Panc1 (cell line): ENCODE measurements at regions of chr1 and their contacts with region 1.

Region 1: DNA sequence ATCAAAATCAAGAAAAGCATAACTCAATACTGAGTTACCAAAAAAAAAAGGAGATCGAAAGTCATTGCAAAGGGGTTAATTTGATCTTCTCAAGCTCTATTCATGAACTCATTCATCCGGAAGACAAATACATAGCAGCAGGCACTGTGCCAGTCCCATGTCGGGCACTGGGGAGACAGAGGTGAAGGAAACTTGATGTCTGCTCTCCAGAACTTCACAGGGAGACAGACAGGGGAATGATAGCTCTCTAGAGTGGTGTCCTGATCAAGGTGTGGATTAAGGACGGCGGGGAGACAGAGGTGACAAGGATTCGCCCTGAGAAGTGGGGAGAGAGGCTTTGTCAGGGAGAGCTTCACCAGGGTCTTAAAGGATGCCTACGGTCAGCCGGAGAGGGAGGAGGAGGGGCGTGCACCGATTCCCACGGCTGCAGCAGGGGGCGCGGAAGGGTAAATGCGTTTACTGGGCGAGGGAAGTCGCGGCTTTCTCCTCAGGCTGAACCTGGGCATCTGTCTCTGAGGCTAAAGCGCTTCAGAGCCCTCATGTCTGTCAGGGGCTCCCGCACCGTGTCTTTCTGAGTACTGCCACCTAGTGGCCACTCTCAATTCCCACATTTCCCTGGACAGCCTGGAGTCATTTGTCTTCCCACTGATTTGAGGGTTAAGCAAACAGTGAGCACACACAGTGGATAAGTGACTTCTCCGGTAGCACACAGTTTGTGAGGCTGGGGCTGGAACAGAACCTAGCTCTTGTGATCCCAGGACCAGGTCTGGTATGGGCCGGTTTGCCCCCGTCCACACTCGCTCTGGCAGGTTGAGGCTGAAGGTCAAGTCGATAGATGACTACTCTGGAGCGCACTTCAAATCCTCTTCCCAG is 152.8 kb downstream of the TENT5C start:
- DNase-seq: peak; percentile 59
- ATAC-seq: peak; percentile 98
- H3K4me3 ChIP-seq: peak overlapping the region; percentile 27 to 58
- H3K27ac ChIP-seq: no peak overlapping the region
- H3K4me1 ChIP-seq: no peaks in the 10 kb centered on the region
- H3K27me3 ChIP-seq: 0 out of 2 replicates have a peak, but pooled peaks cover 2% of the 10 kb centered on the region
- CTCF ChIP-seq: peak; percentile 81

Region 2: GRCh38 chr1:117512743-117513321 is 245.8 kb before region 1 on chr1:
- CTCF ChIA-PET with region 1: interaction called, 3 read pairs
- POLR2A ChIA-PET with region 1: no interaction called
- in situ Hi-C with region 1: no loop called
- intact Hi-C with region 1: loop called (anchors 5 kb)
- DNase-seq: no peak
- ATAC-seq: no peak
- H3K4me3 ChIP-seq: no peak overlapping the region
- H3K27ac ChIP-seq: no peak overlapping the region
- H3K4me1 ChIP-seq: no peaks in the 10 kb centered on the region
- H3K27me3 ChIP-seq: no peaks in the 10 kb centered on the region
- CTCF ChIP-seq: peak; percentile 51; the same call in 1 of the 2 replicates

Region 3: GRCh38 chr1:117534995-117535467 is 223.6 kb before region 1 on chr1:
- CTCF ChIA-PET with region 1: no interaction called
- POLR2A ChIA-PET with region 1: no interaction called
- in situ Hi-C with region 1: no loop called
- intact Hi-C with region 1: loop called (anchors 5 kb)
- DNase-seq: no peak
- ATAC-seq: peak; percentile 78; the same call in 1 of the 2 replicates
- H3K4me3 ChIP-seq: no peak overlapping the region
- H3K27ac ChIP-seq: no peak overlapping the region
- H3K4me1 ChIP-seq: no peaks in the 10 kb centered on the region
- H3K27me3 ChIP-seq: no peaks in the 10 kb centered on the region
- CTCF ChIP-seq: peak; percentile 74

Region 4: DNA sequence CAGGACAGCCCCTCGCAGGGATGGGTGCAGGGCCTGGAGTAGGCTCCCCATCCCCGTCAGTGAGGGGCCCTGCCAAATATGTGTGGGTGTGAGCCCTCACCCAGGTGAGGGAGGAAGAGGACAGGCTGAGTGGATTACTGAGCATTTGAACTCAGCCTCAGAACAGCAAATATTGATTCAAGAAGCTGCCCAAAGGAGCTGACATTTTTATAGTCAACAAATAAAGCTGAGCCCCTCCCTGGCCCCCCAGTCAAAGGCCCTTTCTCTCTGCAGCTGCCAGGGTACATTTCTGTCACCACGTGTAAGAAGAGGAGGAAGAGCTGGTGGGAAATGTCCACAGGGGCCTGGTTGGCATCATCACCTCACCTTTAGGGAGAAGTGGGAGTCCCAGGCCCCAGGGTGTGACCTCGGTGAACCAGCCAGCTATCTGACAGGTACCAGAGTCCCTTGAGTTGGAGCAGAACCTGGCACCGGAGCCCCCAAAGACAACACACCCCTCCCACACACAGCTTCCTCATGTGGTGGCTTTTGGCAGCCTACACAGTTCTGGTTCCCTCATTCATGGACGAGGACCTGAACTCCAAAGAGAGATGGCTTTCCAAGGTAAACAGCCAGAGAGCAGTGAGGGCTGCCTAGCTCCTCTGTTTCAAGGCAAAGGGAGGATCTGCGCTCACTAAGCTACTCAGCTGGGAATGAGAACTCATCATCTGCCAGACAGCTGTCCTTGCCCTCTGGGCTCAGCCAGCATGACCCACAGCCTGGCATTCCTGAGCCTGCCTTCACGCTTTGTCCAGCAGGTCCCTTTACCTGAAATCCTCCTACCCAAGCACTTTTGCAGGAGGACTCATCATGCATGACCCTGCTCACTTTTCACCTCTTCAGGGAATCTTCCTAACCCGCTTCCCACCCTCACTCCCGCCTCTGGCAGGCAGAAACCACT is 195.8 kb before region 1 on chr1:
- CTCF ChIA-PET with region 1: no interaction called
- POLR2A ChIA-PET with region 1: no interaction called
- in situ Hi-C with region 1: no loop called
- intact Hi-C with region 1: no loop called
- DNase-seq: no peak
- ATAC-seq: no peak
- H3K4me3 ChIP-seq: no peak overlapping the region
- H3K27ac ChIP-seq: no peak overlapping the region
- H3K4me1 ChIP-seq: no peaks in the 10 kb centered on the region
- H3K27me3 ChIP-seq: no peaks in the 10 kb centered on the region
- CTCF ChIP-seq: no peak

Region 5: DNA sequence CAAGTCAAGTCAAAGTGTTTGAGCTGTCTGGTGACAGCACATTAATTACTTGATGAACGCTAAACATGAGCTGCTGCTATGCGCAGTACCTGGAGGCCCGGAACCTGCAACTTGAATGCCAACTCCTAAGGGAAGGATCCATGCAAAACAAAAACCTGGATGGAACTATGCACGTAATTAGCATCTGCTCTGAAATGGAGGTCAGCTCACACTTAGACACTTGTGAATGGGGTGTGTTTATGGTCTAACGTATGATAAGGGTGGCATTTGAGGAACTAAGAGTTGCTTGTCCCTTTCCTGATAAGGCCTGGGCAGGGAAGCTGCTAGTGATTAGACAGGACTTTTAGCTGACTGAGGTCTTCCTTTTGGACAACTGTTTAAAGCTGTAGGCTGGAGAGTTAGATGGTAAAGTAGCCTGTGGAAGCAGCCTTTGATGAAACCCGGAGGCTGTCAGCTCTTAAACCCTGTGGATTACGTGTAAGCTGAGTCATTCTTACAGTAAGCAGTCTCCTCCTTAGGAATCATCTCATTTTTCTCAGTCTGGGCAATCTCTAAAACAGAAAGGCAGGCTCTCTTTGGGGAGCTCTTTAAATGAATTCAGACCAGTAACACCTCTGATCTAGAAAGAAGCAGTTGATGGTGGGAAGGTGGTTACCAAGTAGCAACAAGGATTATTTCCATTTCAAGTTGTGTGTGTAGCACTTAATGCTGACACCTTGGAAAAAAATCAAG is 146.0 kb before region 1 on chr1:
- CTCF ChIA-PET with region 1: interaction called, 3 read pairs
- POLR2A ChIA-PET with region 1: interaction called, 3 read pairs
- in situ Hi-C with region 1: no loop called
- intact Hi-C with region 1: loop called (anchors 5 kb)
- DNase-seq: no peak
- ATAC-seq: peak; percentile 84
- H3K4me3 ChIP-seq: peak overlapping the region in 1 of 2 experiments; percentile 27; a peak in 2 of 4 replicates
- H3K27ac ChIP-seq: peak overlapping the region; percentile 5
- H3K4me1 ChIP-seq: peaks cover 46% of the 10 kb centered on the region
- H3K27me3 ChIP-seq: no peaks in the 10 kb centered on the region
- CTCF ChIP-seq: no peak

Region 6: DNA sequence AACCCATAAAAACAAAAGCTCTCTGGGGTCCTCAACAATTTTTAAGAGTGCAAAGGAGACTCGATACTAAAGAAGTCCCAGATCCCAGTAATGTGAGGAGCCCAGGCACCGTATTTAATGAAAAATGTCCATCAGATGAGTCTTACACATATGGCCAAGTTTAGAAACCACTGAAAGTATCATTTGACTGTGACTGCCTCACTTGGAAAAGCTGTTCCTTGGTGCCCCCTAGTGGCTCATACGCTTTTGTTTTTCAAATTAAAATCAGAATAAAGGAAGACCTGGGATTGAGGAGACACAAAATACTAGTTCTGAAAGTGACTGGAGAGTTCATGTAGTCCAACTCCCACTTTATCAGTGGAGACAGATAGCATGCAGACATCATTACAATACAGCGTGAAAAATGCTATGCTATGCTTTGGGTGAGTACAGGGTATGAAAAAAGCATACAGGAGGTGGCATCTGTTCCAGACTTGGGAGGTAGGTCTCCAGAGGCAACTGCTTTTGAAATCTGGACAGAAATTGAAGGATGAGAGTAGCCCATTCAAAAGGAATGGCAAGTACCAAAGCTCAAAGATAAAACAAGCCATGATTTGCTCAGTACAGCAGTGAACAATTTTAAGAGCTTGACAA is 136.9 kb after region 1 on chr1:
- CTCF ChIA-PET with region 1: interaction called, 4 read pairs
- POLR2A ChIA-PET with region 1: no interaction called
- in situ Hi-C with region 1: no loop called
- intact Hi-C with region 1: loop called (anchors 10 kb)
- DNase-seq: peak; percentile 38
- ATAC-seq: peak; percentile 68; the same call in 1 of the 2 replicates
- H3K4me3 ChIP-seq: no peak overlapping the region
- H3K27ac ChIP-seq: no peak overlapping the region
- H3K4me1 ChIP-seq: no peaks in the 10 kb centered on the region
- H3K27me3 ChIP-seq: no peaks in the 10 kb centered on the region
- CTCF ChIP-seq: peak; percentile 77

Region 7: DNA sequence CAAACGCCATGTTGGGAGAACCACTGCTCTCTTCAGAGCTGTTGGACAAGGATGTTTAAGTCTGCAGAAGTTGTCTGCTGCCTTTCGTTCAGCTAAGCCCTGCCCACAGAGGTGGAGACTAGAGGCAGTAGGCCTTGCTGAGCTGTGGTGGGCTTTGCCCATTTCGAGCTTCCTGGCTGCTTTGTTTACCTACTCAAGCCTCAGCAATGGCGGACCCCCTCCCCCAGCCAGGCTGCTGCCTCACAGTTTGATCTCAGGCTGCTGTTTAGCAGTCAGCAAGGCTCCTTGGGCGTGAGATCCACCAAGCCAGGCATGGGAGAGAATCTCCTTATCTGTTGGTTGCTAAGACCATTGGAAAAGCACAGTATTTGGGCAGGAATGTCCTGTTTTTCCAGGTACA is 245.6 kb after region 1 on chr1:
- CTCF ChIA-PET with region 1: no interaction called
- POLR2A ChIA-PET with region 1: no interaction called
- in situ Hi-C with region 1: no loop called
- intact Hi-C with region 1: no loop called
- DNase-seq: no peak
- ATAC-seq: no peak
- H3K4me3 ChIP-seq: no peak overlapping the region
- H3K27ac ChIP-seq: no peak overlapping the region
- H3K4me1 ChIP-seq: no peaks in the 10 kb centered on the region
- H3K27me3 ChIP-seq: no peaks in the 10 kb centered on the region
- CTCF ChIP-seq: no peak